PC-3 (cell line): ENCODE measurements at regions of chr6 and their contacts with region 1.

Region 1: DNA sequence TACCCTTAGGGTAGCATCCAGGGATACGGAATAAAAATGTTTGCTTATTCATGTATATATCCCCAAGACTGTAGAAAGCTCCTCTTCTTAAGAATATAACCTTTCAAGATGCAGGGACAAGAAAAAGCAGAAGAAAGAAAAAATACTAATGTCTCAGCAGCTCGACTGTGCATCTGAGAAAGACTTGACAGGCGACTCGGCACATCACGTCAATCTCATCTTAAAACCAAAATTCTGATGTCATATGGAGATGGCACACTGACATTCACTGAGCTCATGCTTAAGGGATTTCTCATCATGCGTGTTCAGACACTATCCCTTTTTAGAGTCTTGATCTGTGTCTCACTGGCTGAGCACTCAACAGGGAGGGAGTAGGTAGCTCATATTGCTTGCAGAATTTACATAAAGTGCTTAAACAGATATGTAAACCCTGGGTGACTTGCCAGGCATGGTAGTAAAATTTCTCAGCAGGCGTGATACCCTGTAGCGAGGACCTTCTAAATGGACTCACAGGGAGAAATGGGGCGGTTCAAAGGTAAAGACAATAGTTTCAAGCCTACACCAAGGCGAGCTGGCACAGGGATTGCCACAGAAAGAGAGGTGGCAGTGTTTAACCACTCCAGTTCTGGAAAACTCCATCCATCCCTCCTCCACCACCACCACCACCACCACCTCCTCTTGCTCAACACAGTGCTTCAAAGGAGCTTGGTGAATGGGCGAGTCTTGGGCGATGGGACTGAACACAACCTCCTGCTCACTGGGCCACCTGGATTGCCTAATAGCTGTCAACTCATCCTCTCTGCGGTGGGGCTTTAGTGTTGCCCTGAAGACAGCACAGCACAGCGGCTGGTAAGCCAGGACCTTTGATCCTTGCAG is 330.5 kb downstream of the TFAP2A start:
- DNase-seq: peak; percentile 37
- ATAC-seq: no peak
- H3K4me3 ChIP-seq: no peak overlapping the region
- H3K27ac ChIP-seq: no peak overlapping the region
- H3K4me1 ChIP-seq: no peaks in the 10 kb centered on the region
- H3K27me3 ChIP-seq: peaks cover 46% of the 10 kb centered on the region
- CTCF ChIP-seq: 0 out of 2 replicates have a peak, but pooled peaks have one; percentile 21

Region 2: DNA sequence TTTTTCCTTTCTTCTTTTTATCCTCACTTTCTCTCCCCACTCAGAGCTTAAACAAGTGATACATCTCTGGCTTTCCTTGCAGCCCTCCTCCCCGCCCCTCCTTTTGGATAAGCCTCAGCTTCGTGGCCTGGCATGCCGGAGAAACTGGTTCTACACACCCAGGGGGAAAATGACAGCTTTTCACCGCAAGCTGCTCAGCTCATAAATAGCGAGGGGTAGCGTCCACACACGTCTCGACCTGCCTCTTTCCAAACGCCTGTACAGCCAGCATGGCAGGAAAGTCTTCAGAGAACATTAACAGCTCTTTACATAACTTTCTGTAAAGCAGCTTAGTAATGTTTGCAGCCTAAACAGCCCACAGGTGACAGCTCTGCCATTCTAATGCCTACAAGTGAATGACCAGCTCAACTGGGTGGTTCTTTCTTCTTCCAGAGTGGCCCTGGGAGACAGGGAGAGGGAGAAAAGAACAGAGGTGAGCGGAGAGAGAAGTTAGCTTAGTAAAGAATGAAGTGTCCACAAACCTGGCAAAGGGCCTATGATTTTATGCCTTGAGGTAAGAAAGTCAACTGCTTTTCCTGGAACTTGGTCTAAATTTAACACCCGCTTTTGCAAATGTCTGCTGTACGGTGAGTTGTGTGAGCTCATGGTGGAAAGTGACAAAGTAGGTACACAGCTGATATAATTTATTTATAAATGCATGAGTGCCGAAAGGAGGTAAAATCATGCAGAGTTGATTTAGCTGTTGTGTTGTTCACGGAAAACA is 79.0 kb after region 1 on chr6:
- CTCF ChIA-PET with region 1: interaction called, 14 read pairs
- POLR2A ChIA-PET with region 1: no interaction called
- intact Hi-C with region 1: no loop called
- DNase-seq: peak; percentile 83
- ATAC-seq: peak; percentile 37
- H3K4me3 ChIP-seq: peak overlapping the region; percentile 54
- H3K27ac ChIP-seq: peak overlapping the region; percentile 65
- H3K4me1 ChIP-seq: peaks cover 21% of the 10 kb centered on the region
- H3K27me3 ChIP-seq: no peaks in the 10 kb centered on the region
- CTCF ChIP-seq: no peak